ENCODE measurements at regions of chr6 and their contacts with region 1.

Region 1: GRCh38 chr6:5143634-5144311 is 58.6 kb downstream of the PPP1R3G start:
- DNase-seq: peak; percentile 94
- ATAC-seq: peak; percentile 66
- H3K4me3 Mint-ChIP-seq: no peak overlapping the region
- H3K27ac Mint-ChIP-seq: no peak overlapping the region
- H3K4me1 Mint-ChIP-seq: no peaks in the 10 kb centered on the region
- H3K27me3 Mint-ChIP-seq: no peaks in the 10 kb centered on the region
- CTCF ChIP-seq: peak; percentile 90

Region 2: DNA sequence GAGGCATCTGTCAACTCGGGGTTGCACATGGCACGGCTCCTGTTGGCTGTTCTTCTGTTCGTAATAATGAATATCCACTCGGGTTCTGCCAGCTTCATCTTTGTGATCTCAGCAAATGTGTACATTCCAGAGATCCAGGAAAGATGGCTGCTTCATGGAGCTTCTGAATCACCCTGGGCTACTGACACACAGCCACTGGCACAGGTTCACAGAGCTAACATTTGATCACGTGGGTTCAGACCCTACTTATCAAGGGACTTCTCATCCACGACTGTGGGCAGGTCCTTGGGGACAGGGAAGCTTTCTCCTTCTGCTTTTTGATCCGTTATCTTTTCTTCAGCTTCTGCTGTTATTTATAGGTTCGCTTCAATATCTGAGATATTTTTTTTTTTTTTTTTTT is 40.5 kb before region 1 on chr6:
- CTCF ChIA-PET with region 1: no interaction called
- POLR2A ChIA-PET with region 1: no interaction called
- intact Hi-C with region 1: no loop called
- DNase-seq: no peak
- ATAC-seq: no peak
- H3K4me3 Mint-ChIP-seq: no peak overlapping the region
- H3K27ac Mint-ChIP-seq: no peak overlapping the region
- H3K4me1 Mint-ChIP-seq: no peaks in the 10 kb centered on the region
- H3K27me3 Mint-ChIP-seq: no peaks in the 10 kb centered on the region
- CTCF ChIP-seq: no peak

Region 3: DNA sequence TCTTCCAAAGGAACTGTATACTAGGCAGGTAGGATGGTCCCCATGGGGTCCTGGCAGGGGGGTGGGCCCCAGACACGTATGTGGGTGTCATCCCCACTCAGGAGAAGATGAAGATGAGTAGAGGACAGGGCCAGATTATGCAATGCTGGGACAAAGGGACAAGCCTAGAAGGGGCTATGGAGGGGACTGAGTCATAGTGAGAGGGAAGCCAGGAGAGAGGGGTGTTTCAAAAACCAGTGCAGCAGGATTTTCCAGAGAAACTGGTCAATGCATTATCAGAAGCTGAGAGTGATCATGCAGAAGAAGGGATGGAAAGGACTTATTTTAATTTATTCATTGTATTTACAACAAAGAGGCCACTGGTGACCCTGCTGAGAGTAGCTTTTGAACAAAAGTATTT is 15.4 kb after region 1 on chr6:
- CTCF ChIA-PET with region 1: interaction called, 14 read pairs
- POLR2A ChIA-PET with region 1: no interaction called
- intact Hi-C with region 1: no loop called
- DNase-seq: no peak
- ATAC-seq: no peak
- H3K4me3 Mint-ChIP-seq: no peak overlapping the region
- H3K27ac Mint-ChIP-seq: no peak overlapping the region
- H3K4me1 Mint-ChIP-seq: peaks cover 4% of the 10 kb centered on the region
- H3K27me3 Mint-ChIP-seq: no peaks in the 10 kb centered on the region
- CTCF ChIP-seq: no peak

Region 4: GRCh38 chr6:5184218-5184617 is 40.4 kb after region 1 on chr6:
- CTCF ChIA-PET with region 1: interaction called, 57 read pairs
- POLR2A ChIA-PET with region 1: no interaction called
- intact Hi-C with region 1: no loop called
- DNase-seq: no peak
- ATAC-seq: no peak
- H3K4me3 Mint-ChIP-seq: no peak overlapping the region
- H3K27ac Mint-ChIP-seq: no peak overlapping the region
- H3K4me1 Mint-ChIP-seq: peaks cover 7% of the 10 kb centered on the region
- H3K27me3 Mint-ChIP-seq: no peaks in the 10 kb centered on the region
- CTCF ChIP-seq: no peak

Region 5: DNA sequence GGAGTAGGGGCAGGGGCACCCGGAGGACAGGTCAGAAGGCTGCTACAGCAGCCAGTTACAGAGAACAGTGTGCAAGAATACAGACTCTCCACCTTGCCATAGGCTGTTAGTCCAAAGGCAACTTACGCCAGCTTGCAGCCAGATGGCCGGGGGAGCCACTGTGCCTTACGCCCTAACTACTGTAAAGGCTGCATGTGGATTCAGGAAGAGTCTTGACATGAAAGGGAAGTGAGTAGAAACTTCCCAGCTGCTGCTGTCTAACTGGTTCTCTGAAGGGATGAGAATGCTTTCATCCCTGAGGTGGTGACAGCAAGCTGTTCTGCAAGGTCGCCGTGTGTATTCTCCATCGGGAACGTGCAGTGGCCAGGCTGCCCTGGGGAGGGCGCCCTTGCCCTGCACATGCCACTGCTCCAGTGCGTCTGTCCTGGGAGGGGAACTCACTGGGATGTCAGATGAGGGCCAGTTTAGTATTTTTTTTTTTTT is 70.8 kb after region 1 on chr6:
- CTCF ChIA-PET with region 1: interaction called, 17 read pairs
- POLR2A ChIA-PET with region 1: no interaction called
- intact Hi-C with region 1: no loop called
- DNase-seq: peak; percentile 47
- ATAC-seq: peak; percentile 69
- H3K4me3 Mint-ChIP-seq: no peak overlapping the region
- H3K27ac Mint-ChIP-seq: no peak overlapping the region
- H3K4me1 Mint-ChIP-seq: peaks cover 8% of the 10 kb centered on the region
- H3K27me3 Mint-ChIP-seq: no peaks in the 10 kb centered on the region
- CTCF ChIP-seq: peak; percentile 67

Region 6: DNA sequence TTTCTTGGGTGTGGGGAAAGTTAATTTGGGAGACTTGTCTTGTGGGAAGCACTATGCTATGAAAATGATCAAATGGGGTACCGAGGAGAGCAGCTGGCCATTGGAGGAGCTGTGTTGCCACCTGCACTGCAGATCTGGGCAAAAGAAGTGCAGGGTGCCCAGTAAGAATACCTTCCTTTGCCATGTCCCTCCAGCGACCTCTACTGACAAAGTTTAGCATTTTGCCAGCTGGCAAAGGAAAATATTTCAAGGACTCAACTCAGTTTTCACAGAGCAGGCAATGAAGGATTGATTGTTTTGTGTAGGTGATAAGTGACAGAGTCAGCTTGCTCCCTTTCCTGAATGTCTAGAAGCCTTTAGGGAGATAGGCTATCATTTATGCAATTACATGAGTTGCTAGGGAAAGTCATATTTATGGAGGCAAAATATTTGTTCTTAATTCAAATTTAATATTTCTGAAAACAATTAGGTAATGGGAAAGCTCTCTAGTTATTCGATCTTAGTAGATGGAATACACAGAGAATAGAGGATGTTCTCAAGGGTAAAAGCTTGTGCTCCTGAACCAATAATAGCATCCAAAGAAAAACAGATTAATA is 236.0 kb after region 1 on chr6:
- CTCF ChIA-PET with region 1: interaction called, 32 read pairs
- POLR2A ChIA-PET with region 1: no interaction called
- intact Hi-C with region 1: no loop called
- DNase-seq: peak; percentile 33
- ATAC-seq: no peak
- H3K4me3 Mint-ChIP-seq: no peak overlapping the region
- H3K27ac Mint-ChIP-seq: no peak overlapping the region
- H3K4me1 Mint-ChIP-seq: peaks cover 4% of the 10 kb centered on the region
- H3K27me3 Mint-ChIP-seq: no peaks in the 10 kb centered on the region
- CTCF ChIP-seq: peak; percentile 46

Region 7: GRCh38 chr6:5394280-5394679 is 250.5 kb after region 1 on chr6:
- CTCF ChIA-PET with region 1: interaction called, 17 read pairs
- POLR2A ChIA-PET with region 1: no interaction called
- intact Hi-C with region 1: loop called (anchors 5 kb)
- DNase-seq: no peak
- ATAC-seq: no peak
- H3K4me3 Mint-ChIP-seq: no peak overlapping the region
- H3K27ac Mint-ChIP-seq: no peak overlapping the region
- H3K4me1 Mint-ChIP-seq: peaks cover 8% of the 10 kb centered on the region
- H3K27me3 Mint-ChIP-seq: no peaks in the 10 kb centered on the region
- CTCF ChIP-seq: no peak